ENCODE measurements at regions of chr1 and their contacts with region 1.

Region 1: DNA sequence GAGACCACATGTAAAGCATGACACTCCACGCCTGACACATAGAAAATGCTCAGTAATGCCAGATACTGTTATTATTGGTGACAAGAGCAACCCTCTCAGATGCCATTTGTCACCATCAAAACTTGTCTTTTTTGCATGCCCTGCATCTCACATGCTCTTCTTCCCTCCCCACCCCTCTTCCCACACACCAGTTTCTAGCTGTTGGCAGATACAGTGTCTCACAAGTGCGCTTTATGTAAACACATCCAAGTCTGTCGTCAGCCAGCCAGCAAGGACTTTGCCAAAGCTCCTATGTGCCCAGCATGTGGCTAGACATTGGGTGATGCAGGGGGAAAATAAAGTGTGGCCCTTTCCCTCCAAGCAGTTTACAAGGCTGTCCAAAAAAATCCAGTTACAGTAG is 44.9 kb upstream of the EPHA8 start:
- DNase-seq: no peak
- H3K4me3 ChIP-seq: no peak overlapping the region
- H3K27ac ChIP-seq: no peak overlapping the region
- H3K4me1 ChIP-seq: no peaks in the 10 kb centered on the region
- H3K27me3 ChIP-seq: no peaks in the 10 kb centered on the region
- CTCF ChIP-seq: no peak

Region 2: DNA sequence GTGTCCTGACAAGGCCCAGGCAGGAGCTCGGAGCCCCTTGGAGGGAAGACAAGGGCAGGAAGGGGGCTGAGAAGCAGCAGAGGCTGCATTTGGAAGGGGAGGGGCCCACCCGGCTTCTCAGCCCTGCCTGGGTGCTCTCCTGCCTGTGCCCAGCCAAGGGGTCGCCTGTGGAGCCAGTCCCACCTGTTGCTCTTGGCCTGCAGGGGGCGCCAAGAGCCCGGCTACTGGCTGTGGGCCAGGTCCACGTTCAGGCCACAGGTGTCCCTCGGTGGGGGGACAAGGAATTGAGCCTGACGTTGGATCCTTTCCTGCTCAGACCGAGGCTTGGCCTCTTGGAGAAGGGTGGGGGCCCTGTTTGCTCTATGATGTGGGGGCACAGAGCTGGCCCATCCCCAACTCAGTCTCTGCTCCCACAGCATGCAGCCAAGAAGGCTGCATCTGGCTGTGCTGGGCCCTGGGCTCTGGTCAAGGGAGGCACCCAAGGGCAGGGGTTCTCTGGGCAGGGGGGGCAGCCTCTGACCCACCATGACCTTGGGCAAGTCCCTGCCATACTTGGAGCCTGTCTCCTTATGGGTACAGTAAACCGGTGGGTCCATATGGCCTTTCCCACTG is 386.4 kb before region 1 on chr1:
- CTCF ChIA-PET with region 1: no interaction called
- dilution Hi-C with region 1: no loop called
- in situ Hi-C with region 1: no loop called
- intact Hi-C with region 1: no loop called
- DNase-seq: peak; percentile 26
- H3K4me3 ChIP-seq: no peak overlapping the region
- H3K27ac ChIP-seq: no peak overlapping the region
- H3K4me1 ChIP-seq: peaks cover 16% of the 10 kb centered on the region
- H3K27me3 ChIP-seq: no peaks in the 10 kb centered on the region
- CTCF ChIP-seq: peak; percentile 82 to 90

Region 3: GRCh38 chr1:22575532-22576149 is 57.3 kb after region 1 on chr1:
- CTCF ChIA-PET with region 1: no interaction called
- dilution Hi-C with region 1: loop called (anchors 10 kb)
- in situ Hi-C with region 1: no loop called
- intact Hi-C with region 1: no loop called
- DNase-seq: no peak
- H3K4me3 ChIP-seq: no peak overlapping the region
- H3K27ac ChIP-seq: no peak overlapping the region
- H3K4me1 ChIP-seq: no peaks in the 10 kb centered on the region
- H3K27me3 ChIP-seq: no peaks in the 10 kb centered on the region
- CTCF ChIP-seq: no peak

Region 4: GRCh38 chr1:22600071-22600816 is 81.9 kb after region 1 on chr1:
- CTCF ChIA-PET with region 1: no interaction called
- dilution Hi-C with region 1: no loop called
- in situ Hi-C with region 1: no loop called
- intact Hi-C with region 1: no loop called
- DNase-seq: no peak
- H3K4me3 ChIP-seq: no peak overlapping the region
- H3K27ac ChIP-seq: no peak overlapping the region
- H3K4me1 ChIP-seq: no peaks in the 10 kb centered on the region
- H3K27me3 ChIP-seq: peaks cover 5% of the 10 kb centered on the region
- CTCF ChIP-seq: no peak